IMR-90 (cell line): ENCODE measurements at regions of chr17 and their contacts with region 1.

Region 1: DNA sequence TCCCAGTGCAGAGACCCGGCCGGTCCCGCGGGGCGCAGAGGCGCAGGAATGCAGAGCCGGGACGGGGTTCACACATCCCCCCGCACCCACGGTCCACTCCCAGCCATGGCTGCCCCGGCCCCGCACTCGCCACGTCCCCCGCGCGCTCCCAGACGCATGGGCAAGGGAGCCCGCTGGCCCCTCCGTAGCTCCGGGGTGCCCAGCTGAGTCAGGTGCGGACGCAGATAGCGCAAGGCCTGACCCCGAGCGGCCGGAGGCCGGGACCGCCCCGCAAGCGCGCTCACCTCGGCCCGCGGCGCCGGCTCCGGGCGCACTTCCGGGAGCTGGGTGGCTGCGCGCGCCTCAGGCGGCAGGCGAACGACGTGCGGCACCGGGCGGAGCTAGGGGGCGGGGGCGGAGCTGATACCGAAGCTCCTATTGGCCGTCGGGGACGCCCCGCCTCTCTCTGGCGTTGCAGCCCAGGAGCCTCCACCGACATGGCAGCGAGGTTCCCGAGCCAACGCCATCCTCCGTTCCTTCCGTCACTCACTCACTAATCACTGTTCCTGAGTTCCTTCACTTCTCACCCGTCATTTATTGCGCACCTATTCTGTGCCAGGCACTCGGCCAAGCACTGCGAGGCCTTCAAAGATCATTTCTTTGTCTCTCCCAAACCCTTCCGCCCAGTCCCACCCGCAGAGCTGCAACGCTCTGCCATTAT is at the start of gene ZNF18:
- DNase-seq: peak; percentile 90
- ATAC-seq: peak; percentile 99
- H3K4me3 ChIP-seq: peak within 1 kb of the TSS; percentile 57
- H3K27ac ChIP-seq: peak within 1 kb of the TSS; percentile 80
- H3K4me1 ChIP-seq: no peaks in the 10 kb centered on the region
- H3K27me3 ChIP-seq: no peaks in the 10 kb centered on the region
- CTCF ChIP-seq: 0 out of 2 replicates have a peak, but pooled peaks have one; percentile 3
- POLR2A ChIP-seq: peak; percentile 94
- RAD21 ChIP-seq: no peak
- total RNA-seq, gene ZNF18: 10.3 and 11.7 TPM in 2 replicates

Region 2: GRCh38 chr17:10652984-10653659 is 1344.2 kb before region 1 on chr17:
- CTCF ChIA-PET with region 1: no interaction called
- POLR2A ChIA-PET with region 1: no interaction called
- dilution Hi-C with region 1: no loop called
- in situ Hi-C with region 1: loop called (anchors 25 kb)
- intact Hi-C with region 1: no loop called
- DNase-seq: no peak
- ATAC-seq: no peak
- H3K4me3 ChIP-seq: no peak overlapping the region
- H3K27ac ChIP-seq: no peak overlapping the region
- H3K4me1 ChIP-seq: no peaks in the 10 kb centered on the region; the same call in 1 of the 2 replicates
- H3K27me3 ChIP-seq: no peaks in the 10 kb centered on the region
- CTCF ChIP-seq: no peak
- POLR2A ChIP-seq: no peak
- RAD21 ChIP-seq: no peak

Region 3: DNA sequence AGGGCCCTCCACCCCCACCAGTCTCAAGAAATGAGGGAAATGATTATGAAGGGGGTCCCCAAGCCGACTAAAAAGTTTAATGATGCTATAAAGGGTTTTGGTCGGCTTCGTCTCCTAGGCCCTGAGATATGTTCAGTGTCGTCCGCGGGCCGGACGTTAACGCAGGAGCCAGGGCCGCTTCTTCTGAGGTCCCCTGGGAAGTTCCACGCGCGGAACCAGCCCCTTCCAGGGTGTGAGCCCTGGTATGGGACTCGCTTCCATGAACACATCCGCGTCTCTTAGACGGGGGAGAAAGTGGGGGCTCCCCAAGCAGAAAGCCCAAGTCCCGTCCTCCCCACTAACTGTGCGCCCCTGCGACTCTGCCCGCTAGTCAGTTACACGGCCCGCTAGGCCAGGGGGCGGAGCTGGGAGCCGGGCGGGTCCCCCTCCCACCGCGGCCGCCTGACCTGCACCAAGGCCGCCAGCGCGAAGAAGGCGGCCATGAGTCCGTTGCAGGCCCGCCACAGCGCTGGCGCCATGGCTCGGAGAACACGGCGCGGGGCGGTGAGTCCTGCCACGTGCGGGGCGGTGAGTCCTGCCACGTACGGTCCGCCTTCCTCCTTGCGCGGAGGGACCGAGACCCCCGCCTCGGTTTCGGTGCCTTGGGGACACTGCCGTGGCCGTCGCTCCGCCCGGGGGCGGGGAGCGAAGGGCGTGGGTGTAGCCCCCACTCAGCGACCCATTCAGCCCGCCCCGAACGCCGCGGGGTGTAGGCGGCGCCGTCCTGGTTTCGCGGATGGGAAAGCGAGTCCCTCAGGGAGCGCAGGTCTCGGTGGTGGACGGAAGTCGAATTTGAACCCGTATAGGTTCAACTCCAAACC is 1267.7 kb before region 1 on chr17 and contains the start of gene TMEM220:
- CTCF ChIA-PET with region 1: no interaction called
- POLR2A ChIA-PET with region 1: no interaction called
- dilution Hi-C with region 1: no loop called
- in situ Hi-C with region 1: loop called (anchors 10 kb)
- intact Hi-C with region 1: loop called (anchors 10 kb)
- DNase-seq: peak; percentile 59
- ATAC-seq: peak; percentile 96
- H3K4me3 ChIP-seq: peak within 1 kb of the TSS; percentile 81
- H3K27ac ChIP-seq: peak within 1 kb of the TSS; percentile 81
- H3K4me1 ChIP-seq: no peaks in the 10 kb centered on the region; the same call in 1 of the 2 replicates
- H3K27me3 ChIP-seq: no peaks in the 10 kb centered on the region; the same call in 1 of the 2 replicates
- CTCF ChIP-seq: no peak
- POLR2A ChIP-seq: peak; percentile 43; the same call in 1 of the 2 replicates
- RAD21 ChIP-seq: no peak
- total RNA-seq, gene TMEM220: 1.1 and 1.7 TPM in 2 replicates

Region 4: DNA sequence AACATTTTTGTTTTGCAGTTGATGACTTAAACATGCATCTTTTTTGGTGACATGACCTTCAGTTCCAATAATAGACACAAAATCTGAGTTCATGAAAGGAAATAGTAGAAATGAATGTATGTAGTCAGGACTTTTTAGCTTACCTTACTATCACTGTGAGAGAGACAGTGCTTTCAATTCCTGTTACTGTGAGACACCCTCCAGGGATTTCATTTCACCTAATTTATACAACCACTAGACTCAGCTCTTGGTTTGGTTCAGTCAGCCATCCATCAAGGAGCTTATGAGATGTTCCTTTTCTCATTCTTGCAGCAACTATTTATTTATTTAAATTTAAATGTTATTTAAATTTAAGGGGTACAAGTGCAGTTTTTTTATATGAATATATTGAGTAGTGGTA is 101.3 kb after region 1 on chr17:
- CTCF ChIA-PET with region 1: no interaction called
- POLR2A ChIA-PET with region 1: interaction called, 12 read pairs
- dilution Hi-C with region 1: no loop called
- in situ Hi-C with region 1: no loop called
- intact Hi-C with region 1: no loop called
- DNase-seq: no peak
- ATAC-seq: no peak
- H3K4me3 ChIP-seq: no peak overlapping the region
- H3K27ac ChIP-seq: no peak overlapping the region
- H3K4me1 ChIP-seq: no peaks in the 10 kb centered on the region
- H3K27me3 ChIP-seq: no peaks in the 10 kb centered on the region
- CTCF ChIP-seq: no peak
- POLR2A ChIP-seq: no peak
- RAD21 ChIP-seq: no peak

Region 5: DNA sequence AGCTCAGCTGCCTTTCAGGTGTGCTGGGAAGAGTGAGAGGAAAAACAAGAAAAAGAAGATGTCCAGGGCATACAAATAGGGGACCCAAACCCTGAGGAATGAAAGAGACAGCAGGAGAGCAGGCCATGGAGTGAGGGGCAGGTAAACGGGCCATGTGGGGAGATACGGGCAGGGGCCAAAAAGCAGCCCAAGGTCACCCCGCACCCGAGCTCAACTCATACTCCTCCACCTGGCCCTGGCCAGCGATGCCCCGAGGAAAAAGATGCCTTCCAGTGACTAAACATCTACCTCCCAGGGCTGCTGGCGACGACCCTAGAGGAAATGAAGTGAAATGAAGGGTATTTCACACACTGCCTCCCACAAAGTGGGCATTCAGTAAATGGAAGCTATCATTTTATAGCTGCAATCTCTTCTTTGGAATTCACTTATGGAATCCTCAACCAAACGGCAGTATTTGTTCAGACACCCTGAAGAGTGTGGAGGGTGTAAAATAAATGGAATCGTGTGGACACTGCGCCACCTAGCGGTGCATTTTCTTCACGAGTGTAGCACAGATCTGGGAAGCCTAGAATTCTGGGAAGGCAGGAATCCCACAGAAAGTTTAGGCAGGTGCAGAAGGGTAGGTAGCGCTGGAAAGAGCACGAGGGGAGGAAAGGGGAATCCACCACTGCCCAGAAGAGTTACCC is 1005.6 kb after region 1 on chr17:
- CTCF ChIA-PET with region 1: no interaction called
- POLR2A ChIA-PET with region 1: no interaction called
- dilution Hi-C with region 1: no loop called
- in situ Hi-C with region 1: loop called (anchors 10 kb)
- intact Hi-C with region 1: loop called (anchors 5 kb)
- DNase-seq: peak; percentile 77
- ATAC-seq: peak; percentile 95
- H3K4me3 ChIP-seq: no peak overlapping the region
- H3K27ac ChIP-seq: no peak overlapping the region
- H3K4me1 ChIP-seq: no peaks in the 10 kb centered on the region
- H3K27me3 ChIP-seq: no peaks in the 10 kb centered on the region
- CTCF ChIP-seq: peak; percentile 83
- POLR2A ChIP-seq: no peak
- RAD21 ChIP-seq: peak; percentile 88